ENCODE measurements at regions of chrX and their contacts with region 1.

Region 1: DNA sequence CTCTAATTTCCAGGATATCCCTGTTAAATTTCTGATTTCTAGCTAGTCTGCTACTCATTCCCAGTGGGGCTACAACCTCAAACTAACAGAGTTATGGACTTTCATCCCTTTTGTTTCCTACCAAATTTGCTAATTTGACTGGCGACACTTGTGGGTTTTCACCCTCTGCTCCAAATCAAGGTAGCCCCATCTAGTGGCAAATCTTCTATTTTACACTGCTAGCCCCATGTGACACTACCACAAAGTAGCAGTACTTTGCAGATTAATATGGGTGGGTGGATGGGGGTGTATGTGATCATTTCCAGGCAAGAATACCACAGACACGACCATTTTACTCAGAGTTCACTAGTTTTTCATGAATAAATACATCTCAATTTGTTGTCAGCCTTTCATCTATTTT is 150.3 kb downstream of the MSL3 start:
- DNase-seq: peak in 7 of 9 donors; percentile 15 to 45 (median 31)
- ATAC-seq: peak; percentile 65
- H3K4me3 ChIP-seq: no peak overlapping the region
- H3K4me3 Mint-ChIP-seq: no peak overlapping the region
- H3K27ac ChIP-seq: no peak overlapping the region
- H3K27ac Mint-ChIP-seq: no peak overlapping the region
- H3K4me1 ChIP-seq: no peaks in the 10 kb centered on the region
- H3K4me1 Mint-ChIP-seq: peaks cover 0 to 12% (median 7%) of the 10 kb centered on the region in 7 donors
- H3K27me3 ChIP-seq: no peaks in the 10 kb centered on the region
- H3K27me3 Mint-ChIP-seq: no peaks in the 10 kb centered on the region

Region 2: DNA sequence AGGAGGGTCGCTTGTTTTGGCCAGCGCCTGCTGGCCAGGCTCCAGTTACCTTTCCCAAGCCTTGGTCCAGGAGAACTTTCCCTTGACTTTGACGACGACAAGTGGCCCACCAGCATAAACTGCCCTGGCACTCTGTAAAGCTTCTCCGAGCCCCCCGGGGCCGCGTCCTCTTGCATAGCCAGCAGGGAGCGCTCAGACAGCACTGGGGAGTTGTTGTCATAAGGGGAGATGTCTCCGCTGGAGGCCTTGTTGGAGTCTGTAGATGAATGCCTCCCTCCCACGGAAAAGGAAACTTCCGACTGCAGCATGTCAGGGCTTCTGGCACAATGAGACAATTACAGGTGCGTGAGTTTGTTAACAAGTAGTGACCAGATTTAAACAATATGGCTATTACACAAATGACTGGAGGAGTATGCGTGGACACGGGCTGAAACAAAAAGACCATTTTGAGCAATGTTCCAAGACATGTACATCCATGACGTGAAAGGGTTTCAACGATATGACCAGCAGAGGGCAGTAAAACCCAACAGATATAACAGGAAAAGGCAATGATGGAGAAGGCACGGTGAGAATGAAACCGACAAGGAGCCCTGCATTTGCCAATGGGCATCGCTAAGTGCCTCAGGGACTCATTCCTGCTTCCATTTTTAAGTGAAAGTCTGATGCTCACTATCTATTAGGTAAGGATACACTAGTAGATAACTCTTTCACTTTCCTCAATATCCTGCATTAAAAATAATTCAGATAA is 764.3 kb before region 1 on chrX:
- CTCF ChIA-PET with region 1: no interaction called
- POLR2A ChIA-PET with region 1: no interaction called
- intact Hi-C with region 1: loop called in 1 of 2 experiments (anchors 5 kb)
- DNase-seq: peak in 8 of 9 donors; percentile 20 to 62 (median 52)
- ATAC-seq: peak; percentile 79
- H3K4me3 ChIP-seq: no peak overlapping the region
- H3K4me3 Mint-ChIP-seq: peak overlapping the region in 6 of 10 donors; percentile 10 to 59 (median 34)
- H3K27ac ChIP-seq: no peak overlapping the region
- H3K27ac Mint-ChIP-seq: no peak overlapping the region
- H3K4me1 ChIP-seq: no peaks in the 10 kb centered on the region
- H3K4me1 Mint-ChIP-seq: peaks cover 0 to 4% (median 3%) of the 10 kb centered on the region in 7 donors
- H3K27me3 ChIP-seq: no peaks in the 10 kb centered on the region
- H3K27me3 Mint-ChIP-seq: peaks cover 0 to 5% (median 0%) of the 10 kb centered on the region in 5 donors

Region 3: GRCh38 chrX:11787564-11787963 is 120.8 kb before region 1 on chrX:
- CTCF ChIA-PET with region 1: interaction called, 5 read pairs
- POLR2A ChIA-PET with region 1: no interaction called
- intact Hi-C with region 1: loop called (anchors 1 kb)
- DNase-seq: peak in 8 of 9 donors; percentile 39 to 70 (median 63)
- ATAC-seq: peak; percentile 79
- H3K4me3 ChIP-seq: peak overlapping the region; percentile 35
- H3K4me3 Mint-ChIP-seq: peak overlapping the region; percentile 53 to 86 (median 75)
- H3K27ac ChIP-seq: peak overlapping the region; percentile 17
- H3K27ac Mint-ChIP-seq: peak overlapping the region in 6 of 9 donors; percentile 25 to 70 (median 45)
- H3K4me1 ChIP-seq: peaks cover 3 to 16% of the 10 kb centered on the region in 2 donors
- H3K4me1 Mint-ChIP-seq: peaks cover under 1 to 44% (median 32%) of the 10 kb centered on the region in 7 donors
- H3K27me3 ChIP-seq: no peaks in the 10 kb centered on the region
- H3K27me3 Mint-ChIP-seq: no peaks in the 10 kb centered on the region

Region 4: DNA sequence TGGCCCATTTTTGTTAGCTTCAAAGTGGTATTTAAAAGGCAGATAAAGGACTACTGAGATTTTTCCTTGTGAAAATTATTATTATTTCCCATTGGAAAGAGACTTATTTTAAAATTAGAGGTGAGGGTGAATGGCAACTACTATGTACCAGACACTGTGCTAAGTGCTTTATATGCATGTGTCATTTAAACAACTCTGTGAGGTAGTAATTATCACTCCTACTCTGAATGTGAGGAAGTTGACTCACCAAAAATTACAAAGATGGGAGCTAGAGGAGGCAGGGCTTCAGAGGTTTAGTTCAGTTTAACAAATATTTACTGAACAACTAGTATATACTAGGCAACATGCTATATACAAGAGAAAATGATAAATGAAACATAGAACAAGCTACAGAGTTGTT is 72.1 kb before region 1 on chrX:
- CTCF ChIA-PET with region 1: no interaction called
- POLR2A ChIA-PET with region 1: no interaction called
- intact Hi-C with region 1: loop called in 1 of 2 experiments (anchors 10 kb)
- DNase-seq: no peak
- ATAC-seq: no peak
- H3K4me3 ChIP-seq: no peak overlapping the region
- H3K4me3 Mint-ChIP-seq: no peak overlapping the region
- H3K27ac ChIP-seq: no peak overlapping the region
- H3K27ac Mint-ChIP-seq: no peak overlapping the region
- H3K4me1 ChIP-seq: no peaks in the 10 kb centered on the region
- H3K4me1 Mint-ChIP-seq: peaks cover 0 to 7% (median 2%) of the 10 kb centered on the region in 7 donors
- H3K27me3 ChIP-seq: no peaks in the 10 kb centered on the region
- H3K27me3 Mint-ChIP-seq: peaks cover 0 to 5% (median 0%) of the 10 kb centered on the region in 5 donors

Measured in naive thymus-derived CD4-positive, alpha-beta T cell (primary cell).